Activated CD4-positive, alpha-beta memory T cell treated with anti-CD3 and anti-CD28 coated beads for 36 hours (primary cell): ENCODE measurements at regions of chr2 and their contacts with region 1.

Region 1: DNA sequence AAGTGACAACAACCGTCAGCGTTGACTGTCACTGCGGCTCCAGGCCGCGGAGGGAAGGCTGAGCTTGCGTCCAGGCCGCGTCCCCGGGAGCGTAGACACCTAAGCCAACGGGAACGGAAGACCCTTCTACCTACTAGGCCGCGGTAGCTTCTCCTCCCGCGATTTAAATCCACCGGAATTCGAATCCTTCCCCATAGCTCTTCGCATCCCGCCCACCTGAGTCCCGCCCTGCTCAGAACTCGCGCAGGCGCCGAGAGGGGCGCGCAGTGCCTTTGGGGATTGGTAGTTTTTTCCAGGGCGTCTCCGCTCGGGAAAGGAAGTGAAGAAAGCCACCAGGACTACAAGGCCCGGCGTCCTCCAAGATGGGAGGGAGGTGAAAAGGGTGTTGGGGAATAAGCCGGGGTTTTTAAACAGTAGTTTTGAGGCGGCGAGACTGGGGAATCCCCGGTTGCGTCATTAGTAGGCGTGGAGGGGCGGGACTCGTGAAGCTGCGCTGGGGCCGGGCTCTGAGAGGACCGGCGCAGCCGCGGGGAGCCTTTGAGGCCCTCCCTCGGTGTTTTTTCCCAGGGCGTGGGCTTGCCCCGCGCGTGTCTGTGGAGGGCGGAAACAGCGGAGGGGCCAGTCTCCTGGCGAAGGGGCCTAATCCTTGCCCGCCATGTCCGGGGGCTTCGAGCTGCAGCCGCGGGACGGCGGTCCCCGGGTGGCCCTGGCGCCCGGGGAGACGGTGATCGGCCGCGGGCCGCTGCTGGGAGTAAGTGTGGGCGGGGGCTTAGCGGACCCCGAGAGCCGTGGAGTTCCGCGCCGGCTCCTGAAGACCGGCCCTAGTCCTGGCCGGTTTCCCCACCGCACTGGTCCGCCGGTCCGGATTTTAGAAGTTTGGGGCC is at the starts of genes APLF and FBXO48:
- DNase-seq: peak; percentile 99
- H3K4me3 Mint-ChIP-seq: peak within 1 kb of the TSS; percentile 97
- H3K27ac Mint-ChIP-seq: peak within 1 kb of the TSS; percentile 94
- H3K4me1 Mint-ChIP-seq: peaks cover 44% of the 10 kb centered on the region
- H3K27me3 Mint-ChIP-seq: no peaks in the 10 kb centered on the region
- total RNA-seq, gene APLF: 3.0 to 3.1 TPM
- total RNA-seq, gene FBXO48: 2.3 to 2.6 TPM

Region 2: GRCh38 chr2:68411397-68412126 is 55.8 kb before region 1 on chr2:
- CTCF ChIA-PET with region 1: no interaction called
- POLR2A ChIA-PET with region 1: no interaction called
- intact Hi-C with region 1: no loop called
- DNase-seq: no peak
- H3K4me3 Mint-ChIP-seq: no peak overlapping the region
- H3K27ac Mint-ChIP-seq: no peak overlapping the region
- H3K4me1 Mint-ChIP-seq: peaks cover 13% of the 10 kb centered on the region
- H3K27me3 Mint-ChIP-seq: no peaks in the 10 kb centered on the region

Region 3: GRCh38 chr2:68441179-68441993 is 25.9 kb before region 1 on chr2:
- CTCF ChIA-PET with region 1: interaction called, 9 read pairs
- POLR2A ChIA-PET with region 1: no interaction called
- intact Hi-C with region 1: loop called (anchors 1 kb)
- DNase-seq: peak; percentile 89
- H3K4me3 Mint-ChIP-seq: no peak overlapping the region
- H3K27ac Mint-ChIP-seq: peak overlapping the region; percentile 73
- H3K4me1 Mint-ChIP-seq: peaks cover 14% of the 10 kb centered on the region
- H3K27me3 Mint-ChIP-seq: no peaks in the 10 kb centered on the region

Region 4: DNA sequence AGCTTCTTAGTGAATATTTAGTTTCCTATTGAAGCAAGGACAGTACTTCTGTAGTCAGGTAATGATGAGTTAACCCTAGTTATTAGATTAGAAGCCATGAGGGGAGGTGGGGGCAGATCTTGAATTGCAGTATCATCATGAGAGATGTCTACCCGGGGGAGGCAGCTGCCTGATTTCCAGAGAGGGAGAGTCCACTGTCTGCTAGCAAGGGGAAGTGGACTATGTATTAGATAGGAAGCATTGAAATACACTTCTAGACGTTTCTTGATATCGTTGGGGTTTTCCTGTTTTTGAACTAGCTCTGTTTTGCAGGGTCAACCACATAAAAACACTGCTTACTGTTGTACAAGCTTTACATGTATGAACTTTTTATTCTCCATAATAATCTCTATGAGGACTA is 38.9 kb after region 1 on chr2:
- CTCF ChIA-PET with region 1: no interaction called
- POLR2A ChIA-PET with region 1: no interaction called
- intact Hi-C with region 1: no loop called
- DNase-seq: no peak
- H3K4me3 Mint-ChIP-seq: no peak overlapping the region
- H3K27ac Mint-ChIP-seq: no peak overlapping the region
- H3K4me1 Mint-ChIP-seq: peaks cover 16% of the 10 kb centered on the region
- H3K27me3 Mint-ChIP-seq: no peaks in the 10 kb centered on the region

Region 5: DNA sequence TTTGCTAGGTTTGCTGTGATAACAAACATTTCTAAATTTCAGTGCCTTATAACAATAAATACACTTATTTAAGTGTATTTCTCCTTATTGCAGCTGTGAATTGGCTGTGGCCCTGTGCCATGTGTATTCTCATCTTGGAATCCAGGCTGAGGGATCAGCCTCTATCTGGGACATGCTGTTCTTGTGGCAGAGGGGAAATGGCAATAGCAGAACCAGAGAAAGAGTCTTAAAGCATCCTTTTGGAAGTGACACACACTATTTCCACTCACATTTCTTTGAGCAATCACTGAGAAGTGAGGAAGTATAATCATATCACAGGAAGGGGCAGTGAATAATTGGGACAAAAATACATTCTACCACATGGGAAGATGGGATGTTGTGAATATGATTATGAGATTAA is 109.9 kb after region 1 on chr2:
- CTCF ChIA-PET with region 1: no interaction called
- POLR2A ChIA-PET with region 1: no interaction called
- intact Hi-C with region 1: no loop called
- DNase-seq: no peak
- H3K4me3 Mint-ChIP-seq: no peak overlapping the region
- H3K27ac Mint-ChIP-seq: no peak overlapping the region
- H3K4me1 Mint-ChIP-seq: no peaks in the 10 kb centered on the region
- H3K27me3 Mint-ChIP-seq: no peaks in the 10 kb centered on the region

Region 6: GRCh38 chr2:68594674-68595492 is 127.6 kb after region 1 on chr2:
- CTCF ChIA-PET with region 1: interaction called, 126 read pairs
- POLR2A ChIA-PET with region 1: no interaction called
- intact Hi-C with region 1: loop called (anchors 1 kb)
- DNase-seq: peak; percentile 62
- H3K4me3 Mint-ChIP-seq: no peak overlapping the region
- H3K27ac Mint-ChIP-seq: no peak overlapping the region
- H3K4me1 Mint-ChIP-seq: peaks cover 8% of the 10 kb centered on the region
- H3K27me3 Mint-ChIP-seq: peaks cover 2% of the 10 kb centered on the region

Region 7: DNA sequence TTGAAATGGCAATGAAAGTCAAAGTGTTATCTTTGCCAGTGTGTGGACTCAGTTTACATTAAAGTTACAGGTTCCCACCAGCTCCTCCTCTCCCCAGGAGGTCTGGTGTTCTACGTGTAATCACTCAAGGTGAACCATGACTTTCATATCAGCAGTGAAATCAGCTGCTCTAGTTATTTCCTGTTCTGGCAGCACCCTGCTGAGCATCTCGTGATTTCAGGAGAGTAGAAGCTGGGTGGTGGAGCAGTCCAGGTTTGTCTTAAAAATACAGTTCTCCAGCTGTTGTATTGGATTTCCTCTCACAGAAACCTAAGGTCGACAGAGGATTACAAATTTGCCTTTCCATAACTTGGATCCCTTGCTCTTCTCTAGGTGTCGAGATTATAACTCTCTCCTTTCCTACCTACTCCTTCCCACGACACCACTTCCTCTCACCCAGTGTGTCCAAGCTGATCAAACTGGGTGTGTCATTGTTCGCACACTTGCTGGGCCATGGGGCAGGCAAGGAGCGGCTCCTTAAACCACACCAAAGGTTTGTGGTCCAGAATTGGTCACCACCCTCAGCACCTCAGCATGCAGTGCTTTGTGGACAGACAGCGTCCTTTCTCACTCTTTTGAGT is 254.3 kb after region 1 on chr2:
- CTCF ChIA-PET with region 1: interaction called, 20 read pairs
- POLR2A ChIA-PET with region 1: interaction called, 4 read pairs
- intact Hi-C with region 1: loop called (anchors 1 kb)
- DNase-seq: peak; percentile 62
- H3K4me3 Mint-ChIP-seq: peak overlapping the region; percentile 61
- H3K27ac Mint-ChIP-seq: peak overlapping the region; percentile 85
- H3K4me1 Mint-ChIP-seq: peaks cover 90% of the 10 kb centered on the region
- H3K27me3 Mint-ChIP-seq: no peaks in the 10 kb centered on the region

Region 8: GRCh38 chr2:68766376-68766845 is 299.1 kb after region 1 on chr2:
- CTCF ChIA-PET with region 1: interaction called, 7 read pairs
- POLR2A ChIA-PET with region 1: interaction called, 4 read pairs
- intact Hi-C with region 1: loop called (anchors 1 kb)
- DNase-seq: peak; percentile 81
- H3K4me3 Mint-ChIP-seq: peak overlapping the region; percentile 76
- H3K27ac Mint-ChIP-seq: peak overlapping the region; percentile 98
- H3K4me1 Mint-ChIP-seq: peaks cover 96% of the 10 kb centered on the region
- H3K27me3 Mint-ChIP-seq: no peaks in the 10 kb centered on the region

Region 9: GRCh38 chr2:68943581-68944568 is 476.6 kb after region 1 on chr2:
- CTCF ChIA-PET with region 1: interaction called, 13 read pairs
- POLR2A ChIA-PET with region 1: no interaction called
- intact Hi-C with region 1: no loop called
- DNase-seq: peak; percentile 58
- H3K4me3 Mint-ChIP-seq: no peak overlapping the region
- H3K27ac Mint-ChIP-seq: no peak overlapping the region
- H3K4me1 Mint-ChIP-seq: peaks cover 8% of the 10 kb centered on the region
- H3K27me3 Mint-ChIP-seq: peaks cover 32% of the 10 kb centered on the region